Activated B cell treated with CpG ODN at 0.5 μM for 24 hours (primary cell): ENCODE measurements at regions of chr11 and their contacts with region 1.

Region 1: DNA sequence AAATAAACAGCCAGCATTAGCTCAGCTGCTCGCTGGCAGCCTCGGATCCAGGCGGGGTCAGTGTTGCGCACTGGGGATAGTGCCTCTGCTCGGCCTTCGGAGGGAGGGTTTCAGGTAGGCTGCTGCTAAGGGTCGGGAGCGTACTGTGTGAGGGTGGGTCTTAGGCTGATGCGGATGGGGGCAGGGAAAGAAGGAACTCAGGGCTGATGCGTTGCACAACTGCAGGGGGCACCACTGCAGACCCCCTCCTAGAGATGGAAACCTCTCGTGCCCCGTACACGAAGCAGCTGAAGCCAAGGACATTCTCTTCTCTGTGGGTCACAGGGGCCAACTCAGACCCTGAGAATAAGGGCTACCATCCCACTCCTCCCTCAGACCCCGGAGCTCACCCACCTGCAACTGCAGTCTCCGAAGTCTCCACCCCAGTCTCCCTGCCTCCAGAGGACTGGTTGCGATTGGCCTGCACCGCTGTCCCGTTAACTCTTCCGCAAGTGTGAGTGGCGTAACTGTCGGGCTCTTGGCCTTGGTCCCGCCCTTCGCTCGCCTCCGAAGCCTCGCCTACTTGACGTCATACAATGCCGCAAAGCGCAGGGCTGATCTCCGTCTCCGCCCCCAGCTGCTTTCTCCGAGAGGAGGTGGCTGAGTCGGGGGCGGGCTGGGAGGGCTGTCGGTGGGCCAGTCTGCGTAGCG is at the start of gene KBTBD3:
- DNase-seq: peak; percentile 91
- ATAC-seq: peak; percentile 90
- H3K4me3 Mint-ChIP-seq: peak within 1 kb of the TSS; percentile 99
- H3K27ac Mint-ChIP-seq: peak within 1 kb of the TSS; percentile 98
- H3K4me1 Mint-ChIP-seq: peaks cover 42% of the 10 kb centered on the region
- H3K27me3 Mint-ChIP-seq: no peaks in the 10 kb centered on the region
- CTCF ChIP-seq: no peak
- total RNA-seq, gene KBTBD3: 6.5 and 7.7 TPM in 2 replicates

Region 2: GRCh38 chr11:105044921-105045524 is 1032.0 kb before region 1 on chr11 and contains the start of gene CARD16:
- CTCF ChIA-PET with region 1: no interaction called
- POLR2A ChIA-PET with region 1: no interaction called
- intact Hi-C with region 1: loop called (anchors 5 kb)
- DNase-seq: no peak
- ATAC-seq: peak; percentile 94
- H3K4me3 Mint-ChIP-seq: peak within 1 kb of the TSS; percentile 94
- H3K27ac Mint-ChIP-seq: peak within 1 kb of the TSS; percentile 95
- H3K4me1 Mint-ChIP-seq: peaks cover 49% of the 10 kb centered on the region
- H3K27me3 Mint-ChIP-seq: no peaks in the 10 kb centered on the region
- CTCF ChIP-seq: no peak
- total RNA-seq, gene CARD16: 31.5 and 33.1 TPM in 2 replicates

Region 3: DNA sequence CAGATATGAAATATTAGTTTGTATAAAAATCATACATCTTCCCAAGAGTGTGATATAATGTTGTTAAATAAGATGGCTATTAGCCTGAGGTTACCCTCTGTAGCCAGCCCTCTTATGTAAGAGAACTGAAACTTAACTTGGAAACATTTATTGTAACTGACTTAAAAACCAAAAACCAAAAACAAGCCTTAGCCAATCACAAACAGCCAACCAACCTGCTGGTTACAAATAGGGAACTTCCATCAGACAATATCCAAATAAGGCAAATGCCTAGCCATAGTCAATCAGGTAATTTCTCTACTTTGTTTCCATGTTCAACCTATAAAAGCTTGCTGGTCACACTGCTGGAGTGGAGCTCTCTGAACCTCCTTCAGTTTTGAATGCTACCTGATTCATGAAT is 14.1 kb before region 1 on chr11:
- CTCF ChIA-PET with region 1: interaction called, 4 read pairs
- POLR2A ChIA-PET with region 1: interaction called, 3 read pairs
- intact Hi-C with region 1: loop called (anchors 1 kb)
- DNase-seq: no peak
- ATAC-seq: peak; percentile 76
- H3K4me3 Mint-ChIP-seq: no peak overlapping the region
- H3K27ac Mint-ChIP-seq: no peak overlapping the region
- H3K4me1 Mint-ChIP-seq: peaks cover 15% of the 10 kb centered on the region
- H3K27me3 Mint-ChIP-seq: no peaks in the 10 kb centered on the region
- CTCF ChIP-seq: no peak

Region 4: DNA sequence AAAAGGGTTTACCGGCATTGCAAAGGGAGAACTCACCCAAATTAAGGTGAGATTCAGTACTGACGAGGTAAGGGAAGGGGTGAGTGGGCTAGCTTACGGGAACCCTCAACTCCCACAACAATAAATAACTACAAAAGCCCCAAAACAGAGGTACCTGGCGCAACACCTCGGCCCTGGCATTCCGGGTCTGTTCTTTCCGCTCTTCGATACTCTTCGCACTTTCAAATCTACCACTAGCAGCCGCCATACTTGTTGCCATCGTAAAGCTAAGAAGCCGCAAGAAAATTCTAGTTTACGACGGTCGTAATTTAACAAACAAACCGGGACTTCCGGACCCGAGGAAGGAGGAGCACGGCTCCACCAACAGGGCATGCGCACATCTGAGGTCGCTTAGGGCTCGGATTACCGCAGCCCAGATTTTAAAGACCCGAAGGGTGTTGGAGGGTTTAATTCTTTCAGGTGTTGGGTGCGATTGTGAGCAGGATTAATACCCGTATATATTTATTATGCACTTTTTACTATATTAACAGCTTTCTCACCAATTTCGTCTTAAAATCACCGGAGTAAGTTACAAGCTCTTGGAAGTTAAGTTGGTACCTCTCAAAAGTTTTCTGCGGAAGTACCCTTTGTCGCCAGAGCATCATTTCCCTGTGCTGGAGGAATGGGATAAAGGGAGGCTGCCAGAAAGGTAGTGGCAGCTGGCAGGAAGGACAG is 1380.7 kb after region 1 on chr11 and contains the start of gene CWF19L2:
- CTCF ChIA-PET with region 1: no interaction called
- POLR2A ChIA-PET with region 1: no interaction called
- intact Hi-C with region 1: loop called (anchors 5 kb)
- DNase-seq: peak; percentile 67
- ATAC-seq: peak; percentile 96
- H3K4me3 Mint-ChIP-seq: peak within 1 kb of the TSS; percentile 90
- H3K27ac Mint-ChIP-seq: peak within 1 kb of the TSS; percentile 93
- H3K4me1 Mint-ChIP-seq: peaks cover 25% of the 10 kb centered on the region
- H3K27me3 Mint-ChIP-seq: peaks cover 3% of the 10 kb centered on the region
- CTCF ChIP-seq: no peak
- total RNA-seq, gene CWF19L2: 24.5 and 26.1 TPM in 2 replicates